HEK293 (cell line): ENCODE measurements at regions of chr2 and their contacts with region 1.

Region 1: GRCh38 chr2:168494190-168494711 is 38.2 kb downstream of the CERS6 start:
- H3K4me3 ChIP-seq: no peak overlapping the region
- H3K27ac ChIP-seq: no peak overlapping the region
- H3K4me1 ChIP-seq: peaks cover 3% of the 10 kb centered on the region; the same call in 1 of the 2 replicates
- CTCF ChIP-seq: no peak

Region 2: DNA sequence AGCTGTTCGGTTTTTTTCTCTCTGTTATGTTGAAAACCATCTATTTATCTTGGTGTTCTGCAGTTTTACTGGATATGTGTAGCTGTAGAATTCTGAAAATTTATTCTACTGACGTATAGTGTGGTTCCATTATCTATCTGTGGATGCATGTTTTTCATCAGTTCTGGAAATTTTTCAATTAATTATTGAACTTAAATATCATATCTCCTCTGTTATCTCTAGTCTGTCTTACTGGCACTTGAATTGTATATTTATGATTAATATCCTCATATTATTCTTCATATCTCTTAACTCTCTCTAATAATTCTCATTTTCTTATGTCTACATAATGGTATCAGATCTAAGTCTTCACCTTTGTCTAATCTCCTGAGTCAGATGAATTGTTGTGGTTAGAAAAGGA is 748.6 kb before region 1 on chr2:
- CTCF ChIA-PET with region 1: no interaction called
- POLR2A ChIA-PET with region 1: no interaction called
- H3K4me3 ChIP-seq: no peak overlapping the region
- H3K27ac ChIP-seq: no peak overlapping the region
- H3K4me1 ChIP-seq: no peaks in the 10 kb centered on the region
- CTCF ChIP-seq: no peak

Region 3: GRCh38 chr2:168283212-168283611 is 211.0 kb before region 1 on chr2:
- CTCF ChIA-PET with region 1: no interaction called
- POLR2A ChIA-PET with region 1: no interaction called
- H3K4me3 ChIP-seq: no peak overlapping the region
- H3K27ac ChIP-seq: no peak overlapping the region
- H3K4me1 ChIP-seq: no peaks in the 10 kb centered on the region; the same call in 1 of the 2 replicates
- CTCF ChIP-seq: no peak

Region 4: DNA sequence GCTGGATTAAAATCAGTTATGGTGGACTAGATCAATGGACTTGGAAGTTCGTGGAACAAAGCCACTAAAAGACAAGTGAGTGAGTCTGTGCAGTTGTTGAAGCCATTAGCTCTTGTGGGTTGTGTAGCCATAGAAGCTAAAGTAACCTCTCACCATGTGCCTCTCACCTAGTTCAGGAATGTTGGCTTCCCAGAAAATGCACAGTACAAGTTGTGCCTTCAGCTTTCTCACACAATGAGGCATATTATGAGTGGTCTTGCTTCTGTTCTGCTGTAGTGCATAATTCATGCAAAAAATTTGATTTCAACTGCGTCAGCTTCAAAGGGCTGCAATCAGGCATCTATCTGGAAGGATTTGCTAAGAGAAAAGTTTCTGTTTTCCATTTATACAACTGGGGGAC is 12.0 kb before region 1 on chr2:
- CTCF ChIA-PET with region 1: interaction called, 10 read pairs
- POLR2A ChIA-PET with region 1: no interaction called
- H3K4me3 ChIP-seq: no peak overlapping the region
- H3K27ac ChIP-seq: no peak overlapping the region
- H3K4me1 ChIP-seq: no peaks in the 10 kb centered on the region
- CTCF ChIP-seq: no peak

Region 5: DNA sequence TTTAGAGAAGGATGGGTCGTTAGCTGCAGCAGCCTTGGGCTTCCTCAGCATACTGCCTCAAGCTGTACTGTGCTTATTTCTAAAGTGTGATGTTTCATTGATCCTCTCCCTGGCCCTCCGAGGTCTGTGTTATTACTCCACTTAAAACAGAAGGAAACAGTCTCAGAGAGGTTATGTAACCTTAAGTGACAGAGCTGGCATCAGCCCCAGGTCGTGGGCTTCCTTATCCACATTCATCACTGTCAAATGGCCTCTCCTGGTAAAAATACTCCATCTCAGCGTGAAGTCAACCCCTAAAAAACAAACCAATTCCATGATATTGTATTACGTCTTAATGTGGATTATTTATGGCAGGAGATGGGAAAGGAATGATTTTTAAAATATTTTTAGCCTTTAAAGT is 154.9 kb after region 1 on chr2:
- CTCF ChIA-PET with region 1: no interaction called
- POLR2A ChIA-PET with region 1: no interaction called
- H3K4me3 ChIP-seq: no peak overlapping the region
- H3K27ac ChIP-seq: no peak overlapping the region
- H3K4me1 ChIP-seq: peaks cover 14% of the 10 kb centered on the region
- CTCF ChIP-seq: no peak

Region 6: DNA sequence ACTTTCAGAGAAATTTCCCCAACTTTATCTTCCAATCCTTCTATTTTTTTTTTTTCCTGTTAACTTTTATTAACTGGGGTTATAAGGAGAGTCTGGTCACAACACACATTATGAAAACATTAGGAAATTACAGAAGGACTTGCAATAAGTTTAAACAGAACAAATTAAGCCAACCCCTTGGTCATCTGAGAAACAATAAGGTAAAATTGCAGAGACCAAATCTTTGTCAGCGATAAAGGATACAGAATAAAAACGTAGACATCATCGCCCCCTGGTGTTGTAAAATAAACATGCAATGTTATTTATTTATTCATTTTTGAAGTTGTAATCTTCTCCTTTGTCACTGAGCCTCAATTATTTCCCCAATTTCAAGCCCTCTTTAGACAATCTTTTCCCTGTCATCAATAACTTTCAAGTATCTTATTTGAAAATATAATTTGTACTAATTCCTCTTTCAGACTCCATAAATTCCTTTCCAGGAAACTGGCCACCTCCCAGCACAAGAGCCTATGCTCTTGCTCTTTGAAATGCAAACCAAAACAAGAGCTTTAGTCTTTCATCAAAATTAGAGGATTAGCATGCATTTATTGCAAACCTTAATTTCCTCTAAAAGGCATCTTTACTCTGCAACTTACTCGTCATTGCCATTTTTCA is 426.4 kb after region 1 on chr2:
- CTCF ChIA-PET with region 1: no interaction called
- POLR2A ChIA-PET with region 1: no interaction called
- H3K4me3 ChIP-seq: no peak overlapping the region
- H3K27ac ChIP-seq: no peak overlapping the region
- H3K4me1 ChIP-seq: no peaks in the 10 kb centered on the region
- CTCF ChIP-seq: peak; percentile 28; the same call in 1 of the 2 replicates